Right cardiac atrium (tissue), 5 donors: ENCODE measurements at regions of chr2 and their contacts with region 1.

Region 1: GRCh38 chr2:168773719-168774521 is 28.5 kb upstream of the NOSTRIN start:
- DNase-seq: peak; percentile 53 to 83 (median 81)
- ATAC-seq: peak; percentile 88 to 90
- H3K4me3 ChIP-seq: no peak overlapping the region
- H3K27ac ChIP-seq: peak overlapping the region; percentile 4
- H3K4me1 ChIP-seq: no peaks in the 10 kb centered on the region
- H3K27me3 ChIP-seq: no peaks in the 10 kb centered on the region

Region 2: DNA sequence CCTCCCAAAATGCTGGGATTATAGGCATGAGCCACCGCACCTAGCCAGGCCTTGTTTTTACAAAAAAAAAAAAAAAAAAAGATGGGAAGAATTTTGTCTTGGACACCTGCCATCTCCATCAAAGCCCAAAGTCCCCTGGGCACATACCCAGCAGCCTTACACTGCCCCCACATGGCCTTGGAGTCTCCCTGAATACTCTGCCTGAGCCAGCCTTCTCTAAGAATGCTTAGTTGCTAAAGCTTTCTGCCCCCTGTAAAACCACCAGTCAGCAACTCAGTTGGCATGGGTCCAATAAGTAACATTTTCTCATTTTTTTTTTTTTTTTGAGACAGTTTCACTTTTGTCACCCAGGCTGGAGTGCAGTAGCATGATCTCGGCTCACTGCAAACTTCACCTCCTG is 75.7 kb after region 1 on chr2:
- intact Hi-C with region 1: loop called in 1 of 4 experiments (anchors 5 kb)
- DNase-seq: peak; percentile 20 to 66 (median 55)
- ATAC-seq: peak; percentile 73 to 84
- H3K4me3 ChIP-seq: no peak overlapping the region
- H3K27ac ChIP-seq: no peak overlapping the region
- H3K4me1 ChIP-seq: no peaks in the 10 kb centered on the region
- H3K27me3 ChIP-seq: no peaks in the 10 kb centered on the region

Region 3: DNA sequence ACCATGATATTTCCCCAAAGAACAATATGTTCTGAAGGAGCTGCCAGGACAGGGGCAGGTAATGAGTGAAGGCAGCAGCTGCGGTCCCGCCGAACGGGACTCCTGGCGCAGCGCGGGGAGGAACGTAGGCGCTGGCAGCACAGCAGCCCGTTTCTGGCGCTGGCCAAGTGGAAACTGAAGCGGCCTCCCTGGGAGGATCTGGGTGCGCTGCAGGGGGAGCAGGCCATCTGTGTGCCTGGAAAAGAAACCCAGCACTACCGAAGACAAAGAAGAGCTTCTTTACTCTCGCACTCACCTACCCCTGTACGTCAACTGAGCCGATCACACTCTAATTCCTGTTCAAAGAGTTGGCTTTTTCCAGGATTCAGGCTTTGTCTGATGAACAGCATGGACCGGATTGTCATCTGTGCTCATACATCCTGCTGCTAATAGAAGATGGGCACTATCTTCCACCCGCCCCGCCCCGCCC is 139.0 kb after region 1 on chr2:
- intact Hi-C with region 1: loop called in 2 of 4 experiments (anchors 10 kb)
- DNase-seq: peak; percentile 28 to 72 (median 61)
- ATAC-seq: peak; percentile 60 to 78
- H3K4me3 ChIP-seq: peak overlapping the region; percentile 48
- H3K27ac ChIP-seq: no peak overlapping the region
- H3K4me1 ChIP-seq: no peaks in the 10 kb centered on the region
- H3K27me3 ChIP-seq: no peaks in the 10 kb centered on the region

Region 4: DNA sequence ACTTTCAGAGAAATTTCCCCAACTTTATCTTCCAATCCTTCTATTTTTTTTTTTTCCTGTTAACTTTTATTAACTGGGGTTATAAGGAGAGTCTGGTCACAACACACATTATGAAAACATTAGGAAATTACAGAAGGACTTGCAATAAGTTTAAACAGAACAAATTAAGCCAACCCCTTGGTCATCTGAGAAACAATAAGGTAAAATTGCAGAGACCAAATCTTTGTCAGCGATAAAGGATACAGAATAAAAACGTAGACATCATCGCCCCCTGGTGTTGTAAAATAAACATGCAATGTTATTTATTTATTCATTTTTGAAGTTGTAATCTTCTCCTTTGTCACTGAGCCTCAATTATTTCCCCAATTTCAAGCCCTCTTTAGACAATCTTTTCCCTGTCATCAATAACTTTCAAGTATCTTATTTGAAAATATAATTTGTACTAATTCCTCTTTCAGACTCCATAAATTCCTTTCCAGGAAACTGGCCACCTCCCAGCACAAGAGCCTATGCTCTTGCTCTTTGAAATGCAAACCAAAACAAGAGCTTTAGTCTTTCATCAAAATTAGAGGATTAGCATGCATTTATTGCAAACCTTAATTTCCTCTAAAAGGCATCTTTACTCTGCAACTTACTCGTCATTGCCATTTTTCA is 146.7 kb after region 1 on chr2:
- intact Hi-C with region 1: loop called in 3 of 4 experiments (anchors 5 to 10 kb)
- DNase-seq: no peak
- ATAC-seq: no peak
- H3K4me3 ChIP-seq: no peak overlapping the region
- H3K27ac ChIP-seq: no peak overlapping the region
- H3K4me1 ChIP-seq: no peaks in the 10 kb centered on the region
- H3K27me3 ChIP-seq: peaks cover 2% of the 10 kb centered on the region

Region 5: DNA sequence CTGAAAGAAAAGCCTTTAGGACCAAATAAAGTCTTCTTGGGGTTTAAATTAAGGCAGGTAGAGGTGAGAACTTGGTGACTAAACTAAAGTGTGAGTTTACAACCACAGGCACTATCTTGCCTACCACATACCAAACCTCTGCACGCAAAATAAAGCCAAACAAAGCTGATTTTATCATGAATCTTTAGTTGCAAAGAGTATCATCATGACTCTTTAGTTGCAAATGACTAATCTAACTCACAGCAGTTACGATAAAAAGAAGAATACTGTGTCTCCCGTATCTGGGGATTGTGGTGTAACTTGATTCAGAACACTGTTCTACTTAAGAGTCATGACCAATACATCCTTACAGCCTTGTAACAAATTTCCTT is 909.1 kb after region 1 on chr2:
- intact Hi-C with region 1: no loop called
- DNase-seq: no peak
- ATAC-seq: no peak
- H3K4me3 ChIP-seq: no peak overlapping the region
- H3K27ac ChIP-seq: no peak overlapping the region
- H3K4me1 ChIP-seq: no peaks in the 10 kb centered on the region
- H3K27me3 ChIP-seq: no peaks in the 10 kb centered on the region